ENCODE measurements at regions of chr19 and their contacts with region 1.

Region 1: DNA sequence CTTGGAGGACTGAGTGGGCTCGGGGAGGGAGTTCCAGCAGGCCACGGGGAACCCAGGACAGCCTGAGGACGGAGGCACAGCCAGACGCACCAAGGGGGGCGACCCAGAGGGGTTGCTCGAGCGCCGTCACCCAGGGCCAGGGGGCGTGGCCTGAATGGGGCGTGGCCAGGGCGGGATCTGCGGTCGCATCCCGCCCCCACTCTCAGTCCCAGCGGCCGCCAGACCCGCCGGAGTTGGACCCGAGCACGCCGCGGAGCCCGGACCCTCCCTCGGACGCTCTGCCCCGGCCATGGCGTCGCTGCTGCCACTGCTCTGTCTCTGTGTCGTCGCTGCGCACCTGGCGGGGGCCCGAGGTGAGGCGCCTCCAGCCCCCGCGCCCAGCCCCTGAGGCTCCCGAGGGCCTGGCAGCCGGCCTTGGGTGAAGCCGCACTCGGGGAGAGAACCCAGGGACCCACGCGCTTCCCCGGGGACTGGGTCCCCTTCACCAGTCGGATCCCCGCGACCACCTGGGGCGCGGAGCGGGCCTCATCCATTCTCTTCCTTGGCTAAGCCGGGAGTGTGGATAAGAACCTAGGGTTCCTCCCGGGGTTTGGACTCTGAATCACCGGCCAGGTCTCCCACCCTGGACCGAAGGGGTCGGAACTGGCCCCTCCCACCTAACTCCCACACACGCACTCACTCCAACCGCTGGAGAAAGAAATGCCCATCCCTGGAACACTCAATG is at the start of gene CILP2:
- DNase-seq: peak in 1 of 7 donors; percentile 37
- H3K4me3 ChIP-seq: peak within 1 kb of the TSS in 1 of 4 donors; percentile 38
- H3K27ac ChIP-seq: no peak within 1 kb of the TSS
- H3K4me1 ChIP-seq: peaks cover 4 to 19% of the 10 kb centered on the region in 2 donors
- H3K27me3 ChIP-seq: peaks cover 47% of the 10 kb centered on the region
- CTCF ChIP-seq: no peak
- POLR2A ChIP-seq: no peak
- total RNA-seq, gene CILP2: 0.22 to 0.43 TPM in 2 of 9 donors, not detected in the others

Region 2: GRCh38 chr19:19105365-19106055 is 432.7 kb before region 1 on chr19:
- intact Hi-C with region 1: no loop called
- DNase-seq: peak; percentile 68 to 86 (median 78)
- H3K4me3 ChIP-seq: peak overlapping the region in 2 of 4 donors; percentile 34 to 50
- H3K27ac ChIP-seq: peak overlapping the region in 2 of 5 donors; percentile 62 to 78
- H3K4me1 ChIP-seq: peaks cover 7 to 16% of the 10 kb centered on the region in 2 donors
- H3K27me3 ChIP-seq: no peaks in the 10 kb centered on the region
- CTCF ChIP-seq: no peak
- POLR2A ChIP-seq: peak in 1 of 2 donors; percentile 20

Region 3: DNA sequence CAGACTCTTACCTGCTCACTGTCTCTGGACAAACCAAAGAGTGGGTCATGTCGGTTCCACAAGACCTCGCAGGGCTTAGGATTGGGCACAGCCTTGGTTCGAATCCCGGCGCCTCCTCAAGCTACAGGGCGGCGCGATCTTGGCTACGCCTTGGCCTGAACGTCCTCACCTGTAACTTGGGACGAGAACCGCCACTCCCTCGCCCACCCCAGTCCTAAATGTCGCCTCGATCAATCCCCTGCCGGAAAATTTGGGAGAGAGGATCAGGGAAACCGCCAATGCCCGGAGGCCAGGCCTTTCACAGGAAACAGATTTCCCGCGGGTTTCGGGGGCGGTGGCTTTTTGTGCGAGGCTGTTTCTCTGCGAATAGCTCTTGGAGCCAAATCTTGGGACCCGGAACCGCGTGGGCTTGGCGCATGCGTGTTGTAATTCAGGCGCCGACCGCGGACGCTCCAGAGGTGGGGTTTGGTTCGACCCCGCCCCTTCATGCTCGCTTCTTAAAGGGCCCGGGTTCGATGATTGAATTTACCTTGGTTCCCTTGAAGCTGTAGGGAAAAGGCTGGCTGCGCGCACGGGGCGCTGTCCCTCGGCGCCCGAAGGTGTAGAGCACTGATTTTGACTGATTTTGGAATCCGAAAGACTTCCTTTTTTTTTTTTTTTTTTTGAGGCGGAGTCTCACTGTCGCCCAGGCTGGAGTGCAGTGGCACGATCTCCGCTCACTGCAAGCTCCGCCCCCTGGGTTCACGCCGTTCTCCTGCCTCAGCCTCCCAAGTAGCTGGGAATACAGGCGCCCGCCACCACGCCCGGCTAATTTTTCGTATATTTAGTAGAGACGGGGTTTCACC is 335.0 kb before region 1 on chr19 and contains the start of gene NR2C2AP:
- intact Hi-C with region 1: no loop called
- DNase-seq: peak; percentile 91 to 96 (median 92)
- H3K4me3 ChIP-seq: peak within 1 kb of the TSS in 3 of 4 donors; percentile 41 to 63 (median 60)
- H3K27ac ChIP-seq: peak within 1 kb of the TSS in 3 of 5 donors; percentile 45 to 68 (median 51)
- H3K4me1 ChIP-seq: peaks cover 7 to 10% of the 10 kb centered on the region in 2 donors
- H3K27me3 ChIP-seq: peaks cover 3% of the 10 kb centered on the region
- CTCF ChIP-seq: no peak
- POLR2A ChIP-seq: no peak
- total RNA-seq, gene NR2C2AP: 4.0 to 16.4 (median 12.3) TPM

Region 4: GRCh38 chr19:19250196-19250801 is 287.9 kb before region 1 on chr19:
- intact Hi-C with region 1: no loop called
- DNase-seq: no peak
- H3K4me3 ChIP-seq: no peak overlapping the region
- H3K27ac ChIP-seq: no peak overlapping the region
- H3K4me1 ChIP-seq: no peaks in the 10 kb centered on the region
- H3K27me3 ChIP-seq: no peaks in the 10 kb centered on the region
- CTCF ChIP-seq: no peak
- POLR2A ChIP-seq: no peak

Region 5: DNA sequence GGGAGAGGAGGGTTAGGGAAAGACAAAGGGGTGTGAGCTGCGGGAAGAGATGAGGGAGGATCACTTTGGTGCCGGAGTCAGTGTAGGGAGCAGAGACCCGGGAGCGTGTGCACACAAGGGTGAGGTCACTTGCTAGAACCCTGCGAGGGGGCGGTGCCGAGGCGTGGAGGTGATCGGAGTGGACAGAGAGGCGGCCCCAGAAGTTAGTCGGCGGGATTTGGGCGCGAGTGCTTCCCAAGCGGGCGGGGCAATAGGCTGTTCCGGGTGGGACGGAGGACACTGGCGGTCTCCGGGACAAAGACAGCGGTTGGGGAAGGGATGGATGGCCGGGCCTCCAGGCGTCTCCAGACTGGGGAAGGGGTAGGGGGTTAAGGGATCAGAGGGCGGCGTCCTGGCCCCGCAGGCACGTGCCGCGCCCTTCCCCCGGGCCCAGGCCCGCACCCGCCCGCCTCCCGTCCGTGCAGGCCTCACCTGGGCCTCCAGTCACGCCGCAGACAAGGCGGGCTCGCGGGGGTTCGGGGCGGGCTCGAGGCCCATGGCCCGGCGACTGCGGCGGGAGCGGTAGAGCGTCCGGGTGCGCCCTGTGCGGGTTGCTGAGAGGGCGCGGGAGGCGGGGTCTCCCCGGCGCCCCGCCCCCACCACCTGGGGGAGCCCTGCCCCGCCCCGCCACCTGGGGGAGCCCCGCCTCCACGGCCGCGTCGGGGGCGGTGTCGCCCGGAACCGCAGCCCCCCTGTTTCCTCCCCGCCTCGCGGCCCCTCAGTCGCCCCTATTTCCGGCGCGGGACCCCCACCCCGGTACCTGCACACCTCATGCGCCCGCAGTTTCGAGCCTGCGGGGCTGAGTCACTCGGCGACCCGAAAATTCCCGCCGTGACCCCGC is 89.6 kb after region 1 on chr19 and contains the start of gene LPAR2:
- intact Hi-C with region 1: no loop called
- DNase-seq: no peak
- H3K4me3 ChIP-seq: peak within 1 kb of the TSS in 1 of 4 donors; percentile 57
- H3K27ac ChIP-seq: peak within 1 kb of the TSS in 1 of 5 donors; percentile 26
- H3K4me1 ChIP-seq: peaks cover 0 to 12% of the 10 kb centered on the region in 2 donors
- H3K27me3 ChIP-seq: no peaks in the 10 kb centered on the region
- CTCF ChIP-seq: no peak
- POLR2A ChIP-seq: no peak
- total RNA-seq, gene LPAR2: 0.95 to 5.1 (median 3.6) TPM

Region 6: DNA sequence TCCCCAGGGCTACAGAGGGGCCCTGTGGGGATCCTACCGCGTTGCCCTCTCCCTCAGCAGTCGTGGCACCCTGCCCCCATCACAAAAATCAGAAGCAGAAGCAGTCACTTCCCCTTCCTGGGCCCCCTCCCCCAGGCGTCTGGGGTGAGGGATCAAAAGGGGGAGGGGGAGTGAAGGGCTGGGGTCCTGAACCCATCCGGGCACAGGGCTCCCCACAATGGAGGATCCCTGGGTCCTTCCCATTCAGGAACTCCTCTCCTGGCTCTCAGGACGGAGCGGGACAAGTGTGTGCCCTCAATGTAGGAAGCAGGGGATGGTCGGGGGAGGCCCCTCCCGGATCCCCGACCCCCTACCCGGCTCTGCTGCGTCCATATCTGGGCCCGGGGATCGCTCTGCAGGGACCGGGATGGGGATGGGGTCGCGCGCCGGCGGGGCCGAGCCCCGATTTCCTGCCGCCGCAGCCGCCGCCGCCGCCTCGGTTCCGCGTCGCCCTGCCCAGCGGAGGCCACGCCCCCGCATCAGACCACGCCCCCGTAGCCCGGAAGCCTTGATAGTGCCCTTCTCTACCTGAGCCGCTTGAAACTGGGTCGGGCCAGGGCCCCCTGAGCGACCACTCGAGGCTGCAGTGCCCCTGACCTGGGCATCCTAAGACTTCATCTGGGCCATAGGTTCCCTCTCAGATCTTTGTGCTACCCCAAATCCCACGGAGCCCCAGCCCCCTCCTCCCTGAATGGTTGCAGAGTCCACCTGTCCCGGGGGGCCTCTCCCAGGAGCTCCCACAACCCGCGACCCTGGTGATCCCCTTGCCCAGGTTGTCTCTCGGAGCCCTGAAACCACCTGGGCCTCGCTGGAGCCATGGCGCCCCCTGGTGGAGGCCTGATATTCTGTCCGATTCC is 105.2 kb after region 1 on chr19 and contains the start of gene GMIP:
- intact Hi-C with region 1: loop called (anchors 2 to 5 kb)
- DNase-seq: peak; percentile 57 to 83 (median 72)
- H3K4me3 ChIP-seq: peak within 1 kb of the TSS in 3 of 4 donors; percentile 20 to 91 (median 65)
- H3K27ac ChIP-seq: peak within 1 kb of the TSS in 3 of 5 donors; percentile 31 to 84 (median 32)
- H3K4me1 ChIP-seq: peaks cover 8 to 10% of the 10 kb centered on the region in 2 donors
- H3K27me3 ChIP-seq: no peaks in the 10 kb centered on the region
- CTCF ChIP-seq: peak; percentile 73 to 93 (median 82)
- POLR2A ChIP-seq: peak in 1 of 2 donors; percentile 15
- total RNA-seq, gene GMIP: 0.44 to 17.0 (median 10.3) TPM

Region 7: GRCh38 chr19:19956434-19957075 is 418.3 kb after region 1 on chr19:
- intact Hi-C with region 1: loop called (anchors 2 to 5 kb)
- DNase-seq: no peak
- H3K4me3 ChIP-seq: no peak overlapping the region
- H3K27ac ChIP-seq: no peak overlapping the region
- H3K4me1 ChIP-seq: no peaks in the 10 kb centered on the region
- H3K27me3 ChIP-seq: no peaks in the 10 kb centered on the region
- CTCF ChIP-seq: no peak
- POLR2A ChIP-seq: no peak

Measured in adrenal gland (tissue), 19 donors.